Activated CD4-positive, alpha-beta memory T cell treated with anti-CD3 and anti-CD28 coated beads, Interleukin-2, amount 10 ng/mL, durations not matched to agents 7 days and 5 days (primary cell): ENCODE measurements at regions of chr14 and their contacts with region 1.

Region 1: DNA sequence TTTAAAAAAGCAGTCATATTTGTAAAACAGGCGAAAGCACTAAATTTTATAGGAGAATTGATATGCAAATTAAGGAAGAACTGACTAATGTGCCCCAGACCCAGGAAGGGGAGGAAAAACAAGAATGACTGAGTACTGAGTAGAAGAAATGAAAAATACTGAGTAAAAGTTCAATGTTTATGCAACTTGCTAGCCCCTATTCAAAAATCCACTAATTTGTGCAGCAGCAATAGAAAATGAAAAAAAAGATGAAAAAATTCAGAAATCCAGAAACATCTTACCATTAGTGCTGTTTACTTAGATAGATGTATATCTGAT is 6.1 kb downstream of the CHD8 start:
- DNase-seq: no peak
- H3K4me3 Mint-ChIP-seq: no peak overlapping the region
- H3K27ac Mint-ChIP-seq: peak overlapping the region; percentile 69
- H3K4me1 Mint-ChIP-seq: peaks cover 63% of the 10 kb centered on the region
- H3K27me3 Mint-ChIP-seq: no peaks in the 10 kb centered on the region

Region 2: DNA sequence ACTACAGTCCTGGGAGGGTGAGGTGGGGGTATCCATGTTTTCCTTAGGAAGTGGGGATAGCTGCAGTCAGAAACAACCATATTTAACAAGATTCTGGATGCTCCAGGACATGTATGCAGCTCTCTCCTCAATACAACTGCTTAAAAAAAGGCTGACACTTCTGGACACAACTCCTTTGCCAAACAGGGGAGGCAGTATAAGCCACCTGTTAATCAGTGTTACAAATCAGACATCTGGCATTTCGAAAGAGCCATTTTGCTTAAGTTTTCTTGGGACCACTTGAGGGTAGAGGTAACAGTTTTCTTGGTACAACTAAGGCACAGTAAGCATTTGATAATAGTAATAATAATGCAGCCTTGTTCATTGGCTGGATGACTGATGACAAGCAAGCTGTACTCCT is 122.9 kb before region 1 on chr14:
- CTCF ChIA-PET with region 1: no interaction called
- POLR2A ChIA-PET with region 1: no interaction called
- DNase-seq: no peak
- H3K4me3 Mint-ChIP-seq: no peak overlapping the region
- H3K27ac Mint-ChIP-seq: no peak overlapping the region
- H3K4me1 Mint-ChIP-seq: no peaks in the 10 kb centered on the region
- H3K27me3 Mint-ChIP-seq: peaks cover 10% of the 10 kb centered on the region

Region 3: GRCh38 chr14:21437063-21437901 is 12.6 kb before region 1 on chr14:
- CTCF ChIA-PET with region 1: interaction called, 38 read pairs
- POLR2A ChIA-PET with region 1: interaction called, 103 read pairs
- DNase-seq: peak; percentile 99
- H3K4me3 Mint-ChIP-seq: peak overlapping the region; percentile 86
- H3K27ac Mint-ChIP-seq: peak overlapping the region; percentile 76
- H3K4me1 Mint-ChIP-seq: peaks cover 50% of the 10 kb centered on the region
- H3K27me3 Mint-ChIP-seq: no peaks in the 10 kb centered on the region